ENCODE measurements at regions of chr6 and their contacts with region 1.

Region 1: GRCh38 chr6:2841264-2842138 is at the start of gene SERPINB1:
- DNase-seq: peak; percentile 95 to 97 (median 96)
- H3K4me3 ChIP-seq: peak within 1 kb of the TSS; percentile 58 to 90 (median 61)
- H3K4me3 Mint-ChIP-seq: peak within 1 kb of the TSS; percentile 89 to 98
- H3K27ac ChIP-seq: peak within 1 kb of the TSS; percentile 93 to 94
- H3K27ac Mint-ChIP-seq: peak within 1 kb of the TSS; percentile 94 to 98 (median 98)
- H3K4me1 ChIP-seq: peaks cover 53 to 77% of the 10 kb centered on the region in 2 donors
- H3K4me1 Mint-ChIP-seq: peaks cover 72% of the 10 kb centered on the region
- H3K27me3 ChIP-seq: no peaks in the 10 kb centered on the region
- H3K27me3 Mint-ChIP-seq: no peaks in the 10 kb centered on the region
- CTCF ChIP-seq: no peak
- polyA plus RNA-seq, gene SERPINB1: 126 to 307 (median 306) TPM

Region 2: GRCh38 chr6:2784061-2784460 is 57.4 kb before region 1 on chr6:
- intact Hi-C with region 1: no loop called
- DNase-seq: no peak
- H3K4me3 ChIP-seq: no peak overlapping the region
- H3K4me3 Mint-ChIP-seq: no peak overlapping the region
- H3K27ac ChIP-seq: no peak overlapping the region
- H3K27ac Mint-ChIP-seq: no peak overlapping the region
- H3K4me1 ChIP-seq: no peaks in the 10 kb centered on the region
- H3K4me1 Mint-ChIP-seq: peaks cover 8% of the 10 kb centered on the region
- H3K27me3 ChIP-seq: no peaks in the 10 kb centered on the region
- H3K27me3 Mint-ChIP-seq: peaks cover 0 to 2% (median 0%) of the 10 kb centered on the region in 3 donors
- CTCF ChIP-seq: no peak

Region 3: DNA sequence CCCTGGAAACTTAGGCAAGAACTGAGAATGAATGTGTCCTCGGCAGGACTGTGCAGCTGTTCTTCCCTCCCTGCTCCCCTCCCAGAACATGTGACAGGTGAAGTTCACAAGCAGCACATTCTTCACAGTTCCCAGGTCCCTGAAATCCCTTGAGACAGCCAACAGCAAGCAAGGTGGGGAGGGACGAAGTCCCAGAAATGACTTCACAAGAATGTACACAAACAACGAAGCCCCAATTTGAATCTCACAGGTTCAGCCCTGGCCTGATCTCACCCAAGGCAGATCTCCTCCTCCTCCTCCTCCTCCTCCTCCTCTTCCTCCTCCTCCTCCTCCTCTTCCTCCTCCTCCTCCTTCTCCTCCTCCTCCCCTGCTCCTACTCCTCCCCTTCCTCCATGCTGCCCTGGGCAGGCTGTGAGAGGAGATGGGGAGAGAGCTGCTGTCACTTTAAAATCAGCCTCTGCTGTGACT is 43.9 kb before region 1 on chr6:
- intact Hi-C with region 1: loop called (anchors 1 to 5 kb)
- DNase-seq: no peak
- H3K4me3 ChIP-seq: peak overlapping the region in 1 of 3 experiments; percentile 13
- H3K4me3 Mint-ChIP-seq: no peak overlapping the region
- H3K27ac ChIP-seq: peak overlapping the region; percentile 94 to 95
- H3K27ac Mint-ChIP-seq: peak overlapping the region; percentile 97 to 100 (median 99)
- H3K4me1 ChIP-seq: peaks cover 72 to 73% of the 10 kb centered on the region in 2 donors
- H3K4me1 Mint-ChIP-seq: peaks cover 76% of the 10 kb centered on the region
- H3K27me3 ChIP-seq: no peaks in the 10 kb centered on the region
- H3K27me3 Mint-ChIP-seq: peaks cover 0 to 4% (median under 1%) of the 10 kb centered on the region in 3 donors
- CTCF ChIP-seq: no peak

Region 4: DNA sequence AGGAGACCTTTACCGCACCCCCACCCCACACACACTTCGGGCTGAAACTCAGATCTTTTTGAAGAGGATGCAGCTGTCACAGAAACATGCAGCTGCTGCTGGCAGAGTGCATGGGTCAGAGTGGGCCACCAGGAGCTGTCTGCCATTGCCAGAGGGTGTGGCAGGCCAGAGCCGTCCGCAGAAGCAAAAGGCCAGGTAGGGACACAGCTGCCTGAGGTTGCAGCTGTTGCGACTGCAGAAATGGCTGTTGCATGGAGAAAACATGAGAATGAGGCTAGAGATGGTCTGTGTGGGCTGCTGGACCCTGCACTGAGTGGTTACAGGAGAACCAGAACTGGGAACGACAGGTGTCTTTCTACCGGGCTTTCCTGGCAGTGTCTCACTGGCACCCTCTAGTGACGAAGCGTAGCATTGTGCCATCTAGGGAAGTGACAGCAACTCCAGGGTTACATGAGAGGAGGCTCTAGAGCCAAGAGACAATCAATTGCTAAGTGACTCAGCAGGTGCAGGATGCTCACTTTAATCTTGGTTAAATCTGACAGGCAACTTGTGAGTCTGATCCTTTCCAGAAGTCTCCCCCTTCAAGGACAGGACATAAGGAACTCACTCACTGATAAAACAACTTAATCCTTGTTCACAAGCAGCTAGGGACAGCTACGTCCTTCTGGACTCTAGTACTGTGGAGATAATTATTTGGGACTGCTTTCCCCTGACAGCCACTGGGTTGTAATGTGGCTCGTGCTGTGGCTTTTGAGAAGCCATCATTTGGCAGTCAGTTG is 90.7 kb after region 1 on chr6:
- intact Hi-C with region 1: loop called (anchors 5 kb)
- DNase-seq: peak; percentile 74 to 88 (median 86)
- H3K4me3 ChIP-seq: peak overlapping the region in 1 of 3 experiments; percentile 50
- H3K4me3 Mint-ChIP-seq: peak overlapping the region; percentile 53 to 76
- H3K27ac ChIP-seq: no peak overlapping the region
- H3K27ac Mint-ChIP-seq: peak overlapping the region in 4 of 7 donors; percentile 45 to 62 (median 53)
- H3K4me1 ChIP-seq: peaks cover 9 to 10% of the 10 kb centered on the region in 2 donors
- H3K4me1 Mint-ChIP-seq: peaks cover 11% of the 10 kb centered on the region
- H3K27me3 ChIP-seq: no peaks in the 10 kb centered on the region
- H3K27me3 Mint-ChIP-seq: peaks cover 0 to 5% (median 1%) of the 10 kb centered on the region in 3 donors
- CTCF ChIP-seq: peak; percentile 94

Region 5: DNA sequence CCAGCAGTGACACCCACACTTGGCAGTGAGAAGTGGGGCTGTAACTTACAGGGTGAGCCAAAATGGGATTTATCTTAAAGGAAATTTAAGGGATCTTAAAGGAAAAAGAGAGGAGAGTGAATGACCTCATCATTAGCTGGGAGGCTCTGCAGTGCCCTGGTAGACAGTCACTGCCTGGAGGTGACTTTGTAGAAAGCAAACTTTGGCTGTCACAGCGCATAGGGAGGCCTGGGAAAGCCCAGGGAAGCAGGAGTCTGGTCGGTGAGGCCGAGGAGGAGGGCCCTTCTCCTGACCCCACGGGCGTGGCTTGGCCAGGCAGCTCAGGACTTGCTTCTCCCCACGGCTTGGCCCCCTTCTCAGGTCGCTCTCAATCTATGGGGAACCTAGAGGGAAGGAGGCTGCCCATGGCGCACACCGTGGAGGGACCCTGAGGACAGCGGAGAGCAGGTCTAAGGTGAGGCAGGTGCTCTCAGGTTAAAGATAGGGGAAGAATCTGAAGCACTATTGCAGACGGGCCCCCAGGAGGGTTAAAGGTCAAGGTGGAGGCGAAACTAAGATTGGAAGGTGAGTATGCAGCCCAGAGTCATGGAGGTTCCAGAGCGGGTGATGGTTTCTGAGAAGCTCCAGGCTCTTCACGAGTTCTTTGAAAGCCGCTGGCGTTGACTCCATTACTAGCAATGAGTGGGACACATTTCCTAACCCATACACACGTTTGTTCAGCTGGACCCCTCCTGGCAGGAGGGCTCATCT is 211.2 kb after region 1 on chr6:
- intact Hi-C with region 1: loop called in 1 of 2 experiments (anchors 10 kb)
- DNase-seq: no peak
- H3K4me3 ChIP-seq: peak overlapping the region in 2 of 3 experiments; percentile 70 to 78
- H3K4me3 Mint-ChIP-seq: peak overlapping the region; percentile 84 to 87
- H3K27ac ChIP-seq: peak overlapping the region in 1 of 2 donors; percentile 74
- H3K27ac Mint-ChIP-seq: peak overlapping the region; percentile 11 to 92 (median 73)
- H3K4me1 ChIP-seq: peaks cover 22 to 29% of the 10 kb centered on the region in 2 donors
- H3K4me1 Mint-ChIP-seq: peaks cover 23% of the 10 kb centered on the region
- H3K27me3 ChIP-seq: no peaks in the 10 kb centered on the region
- H3K27me3 Mint-ChIP-seq: peaks cover 3 to 5% (median 5%) of the 10 kb centered on the region in 3 donors
- CTCF ChIP-seq: no peak

Measured in CD14-positive monocyte (primary cell).